Common myeloid progenitor, CD34-positive (primary cell): ENCODE measurements at regions of chr6 and their contacts with region 1.

Region 1: DNA sequence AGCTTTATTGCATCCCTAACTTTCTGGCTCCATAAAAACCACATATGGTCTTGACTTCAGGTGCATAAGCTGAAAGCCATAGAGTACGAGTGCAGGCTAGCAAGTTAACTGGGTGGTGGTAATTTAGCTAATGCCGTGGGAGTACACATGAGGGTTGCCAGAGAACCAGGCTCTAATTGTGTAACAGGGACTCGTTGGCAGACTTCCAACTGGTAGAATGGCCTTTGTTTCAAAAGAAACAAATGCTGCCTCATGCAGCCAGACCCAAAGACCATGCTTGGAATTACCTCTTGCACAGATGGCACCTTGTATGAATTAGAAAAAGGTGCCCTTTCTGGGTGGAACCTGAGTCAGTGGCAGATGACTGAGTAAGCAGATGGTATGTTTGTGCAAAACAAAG is 73.2 kb downstream of the LY86 start:
- DNase-seq: peak in 2 of 3 donors; percentile 85 to 89
- H3K4me3 ChIP-seq: no peak overlapping the region
- H3K27ac ChIP-seq: no peak overlapping the region
- H3K4me1 ChIP-seq: peaks cover 26 to 79% (median 55%) of the 10 kb centered on the region in 4 experiments
- H3K27me3 ChIP-seq: no peaks in the 10 kb centered on the region

Region 2: DNA sequence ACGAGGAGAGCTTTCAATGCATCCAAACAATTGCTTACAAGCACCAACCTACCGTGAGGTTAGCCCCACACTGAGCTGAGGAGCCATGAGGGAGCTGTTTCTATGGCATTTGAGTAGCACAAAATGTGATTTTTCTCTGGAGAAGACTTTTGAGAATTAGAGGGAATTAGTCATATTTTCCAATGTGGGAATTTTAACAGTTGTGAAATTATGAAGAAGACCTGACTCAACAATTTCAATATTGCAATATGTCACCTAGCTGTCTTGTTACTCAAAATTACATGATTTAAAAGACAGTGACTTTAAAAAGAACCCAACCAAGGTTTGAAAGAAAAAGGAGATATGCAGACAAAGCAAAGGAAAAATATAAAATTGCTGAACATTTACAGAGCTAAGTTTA is 135.8 kb before region 1 on chr6:
- CTCF ChIA-PET with region 1: no interaction called
- POLR2A ChIA-PET with region 1: no interaction called
- DNase-seq: no peak
- H3K4me3 ChIP-seq: no peak overlapping the region
- H3K27ac ChIP-seq: no peak overlapping the region
- H3K4me1 ChIP-seq: no peaks in the 10 kb centered on the region
- H3K27me3 ChIP-seq: peaks cover 2 to 16% (median 4%) of the 10 kb centered on the region in 5 experiments

Region 3: GRCh38 chr6:6676910-6677441 is 15.3 kb after region 1 on chr6:
- CTCF ChIA-PET with region 1: interaction called, 56 read pairs
- POLR2A ChIA-PET with region 1: no interaction called
- DNase-seq: peak; percentile 82 to 88 (median 85)
- H3K4me3 ChIP-seq: peak overlapping the region in 1 of 7 experiments; percentile 56
- H3K27ac ChIP-seq: no peak overlapping the region
- H3K4me1 ChIP-seq: peaks cover 4 to 55% (median 30%) of the 10 kb centered on the region in 4 experiments
- H3K27me3 ChIP-seq: no peaks in the 10 kb centered on the region